CD8-positive, alpha-beta T cell (primary cell): ENCODE measurements at regions of chrX and their contacts with region 1.

Region 1: DNA sequence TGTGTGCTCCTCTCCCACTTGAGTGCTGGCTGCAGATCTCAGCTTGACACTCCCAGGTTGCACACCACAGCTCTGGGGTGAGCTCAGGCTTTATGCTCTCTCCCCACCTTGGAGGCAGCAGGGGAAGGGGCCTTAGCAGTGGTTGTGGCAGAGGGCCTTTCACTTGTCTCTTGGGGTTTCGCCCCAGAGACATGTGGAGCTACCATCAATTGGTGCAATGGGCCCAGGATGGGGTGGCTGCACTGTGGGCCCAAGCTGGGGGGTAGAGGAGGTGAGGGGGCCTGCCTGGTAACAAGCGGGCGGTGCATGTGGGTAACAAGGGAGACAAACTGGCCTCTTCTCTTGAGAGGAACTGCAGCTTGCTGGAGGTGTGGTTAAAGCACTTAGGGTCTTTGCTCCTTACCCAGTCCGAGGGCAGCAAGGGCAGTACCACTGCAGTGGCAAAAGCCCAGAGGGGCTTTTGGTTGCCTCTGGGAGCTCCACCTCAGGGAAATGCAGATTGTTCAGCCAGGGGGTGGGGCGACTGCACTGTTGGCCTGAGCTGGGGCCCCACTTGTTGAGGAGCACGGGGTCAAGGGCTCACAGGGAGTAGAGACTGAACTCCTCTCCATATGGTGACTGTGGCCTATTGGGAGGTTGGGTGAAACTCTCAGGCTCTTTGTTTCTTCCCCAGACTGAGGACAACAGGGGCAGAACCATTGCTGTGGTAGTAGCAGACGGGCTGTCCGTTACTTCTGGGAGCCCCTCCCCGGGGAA is 30.5 kb upstream of the OR13H1 start:
- DNase-seq: no peak
- ATAC-seq: no peak
- H3K4me3 ChIP-seq: no peak overlapping the region
- H3K4me3 Mint-ChIP-seq: no peak overlapping the region
- H3K27ac ChIP-seq: no peak overlapping the region
- H3K27ac Mint-ChIP-seq: no peak overlapping the region
- H3K4me1 ChIP-seq: no peaks in the 10 kb centered on the region
- H3K4me1 Mint-ChIP-seq: no peaks in the 10 kb centered on the region
- H3K27me3 ChIP-seq: no peaks in the 10 kb centered on the region
- H3K27me3 Mint-ChIP-seq: no peaks in the 10 kb centered on the region
- CTCF ChIP-seq: no peak

Region 2: GRCh38 chrX:131493113-131493512 is 20.2 kb before region 1 on chrX:
- CTCF ChIA-PET with region 1: no interaction called
- POLR2A ChIA-PET with region 1: no interaction called
- intact Hi-C with region 1: loop called in 1 of 2 experiments (anchors 2 kb)
- DNase-seq: no peak
- ATAC-seq: no peak
- H3K4me3 ChIP-seq: no peak overlapping the region
- H3K4me3 Mint-ChIP-seq: no peak overlapping the region
- H3K27ac ChIP-seq: no peak overlapping the region
- H3K27ac Mint-ChIP-seq: no peak overlapping the region
- H3K4me1 ChIP-seq: no peaks in the 10 kb centered on the region
- H3K4me1 Mint-ChIP-seq: no peaks in the 10 kb centered on the region
- H3K27me3 ChIP-seq: no peaks in the 10 kb centered on the region
- H3K27me3 Mint-ChIP-seq: no peaks in the 10 kb centered on the region
- CTCF ChIP-seq: no peak